Endothelial cell of umbilical vein (primary cell): ENCODE measurements at regions of chr2 and their contacts with region 1.

Region 1: DNA sequence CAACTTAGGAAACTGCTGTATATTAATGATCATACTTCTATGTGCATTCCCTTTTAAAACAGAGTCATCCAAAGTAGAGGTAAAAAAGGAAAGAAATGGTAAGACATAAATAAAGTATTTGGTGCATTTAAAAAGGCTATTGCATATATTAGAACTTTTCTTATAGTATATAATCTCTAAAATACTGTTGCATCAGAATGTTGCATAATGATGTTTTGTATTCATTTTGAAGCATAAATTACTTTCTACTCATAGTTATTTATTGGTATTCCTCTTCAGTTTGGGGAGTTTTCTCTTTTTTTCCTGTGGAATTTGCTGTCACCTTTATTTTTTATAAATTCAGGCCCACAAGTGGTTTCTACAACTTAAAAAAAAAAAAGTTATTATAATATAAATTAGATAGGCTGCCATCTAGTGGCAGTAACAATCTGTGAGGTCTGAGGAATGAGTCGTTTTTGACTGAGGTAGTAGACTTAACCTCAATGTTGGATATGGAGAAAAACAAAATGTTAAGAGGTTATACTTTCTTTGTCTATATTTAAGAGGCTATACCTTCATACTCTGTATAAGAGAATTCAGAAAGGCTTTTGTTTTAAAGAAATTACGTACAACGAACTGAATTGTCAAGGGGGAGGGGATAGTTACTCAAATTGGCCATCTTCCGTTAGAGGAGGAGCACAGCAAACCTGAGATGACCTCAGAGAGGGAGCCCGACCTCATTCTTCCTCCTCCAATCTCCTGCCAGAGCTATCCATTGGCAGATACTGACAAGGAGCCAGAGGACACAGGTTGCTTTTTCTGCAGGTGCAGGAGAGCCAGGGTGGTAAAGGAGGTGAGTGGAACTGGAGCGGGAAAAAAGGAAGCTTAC is 23.8 kb downstream of the ANKAR start:
- DNase-seq: peak; percentile 60
- H3K4me3 ChIP-seq: no peak overlapping the region
- H3K27ac ChIP-seq: no peak overlapping the region
- H3K4me1 ChIP-seq: no peaks in the 10 kb centered on the region
- H3K27me3 ChIP-seq: no peaks in the 10 kb centered on the region
- CTCF ChIP-seq: peak; percentile 13 to 33
- POLR2A ChIP-seq: no peak

Region 2: GRCh38 chr2:189534854-189535832 is 163.1 kb before region 1 on chr2:
- CTCF ChIA-PET with region 1: no interaction called
- POLR2A ChIA-PET with region 1: no interaction called
- dilution Hi-C with region 1: no loop called
- intact Hi-C with region 1: no loop called
- DNase-seq: no peak
- H3K4me3 ChIP-seq: no peak overlapping the region
- H3K27ac ChIP-seq: no peak overlapping the region
- H3K4me1 ChIP-seq: no peaks in the 10 kb centered on the region
- H3K27me3 ChIP-seq: no peaks in the 10 kb centered on the region
- CTCF ChIP-seq: no peak
- POLR2A ChIP-seq: no peak

Region 3: DNA sequence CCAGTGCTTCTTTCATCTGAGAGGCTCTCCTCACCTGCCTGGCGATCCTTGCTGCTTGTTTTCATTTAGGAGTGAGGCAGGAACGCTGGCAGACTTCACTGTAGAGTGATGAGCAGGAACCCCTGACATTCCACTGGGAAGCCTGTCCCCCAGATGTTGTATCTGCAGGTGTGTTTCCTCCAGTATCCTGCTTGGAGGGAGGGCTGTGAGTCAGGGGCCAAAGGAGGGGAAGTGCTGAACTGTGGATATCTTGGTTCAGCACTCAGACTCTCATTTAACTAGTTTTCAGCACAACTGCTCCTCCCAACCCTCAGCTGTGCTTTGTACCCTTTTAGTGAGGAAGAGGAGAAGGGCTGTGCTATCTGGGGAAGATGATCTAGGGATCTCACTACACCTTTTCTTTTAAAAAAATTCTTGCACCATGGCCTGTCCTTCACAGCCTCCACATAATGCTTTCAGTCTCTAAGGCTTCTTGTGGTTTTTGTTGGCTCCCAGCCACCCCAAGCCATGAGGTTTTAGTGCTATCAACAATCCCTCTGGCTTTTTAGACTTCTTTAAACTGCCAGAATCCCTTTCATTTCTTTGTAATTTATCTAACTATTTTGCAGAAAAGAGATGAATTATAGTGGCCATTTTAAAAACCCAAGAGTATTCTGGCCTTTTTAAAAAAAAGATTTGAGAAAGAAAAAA is 12.6 kb before region 1 on chr2:
- CTCF ChIA-PET with region 1: interaction called, 10 read pairs
- POLR2A ChIA-PET with region 1: no interaction called
- dilution Hi-C with region 1: no loop called
- intact Hi-C with region 1: no loop called
- DNase-seq: peak; percentile 59
- H3K4me3 ChIP-seq: no peak overlapping the region
- H3K27ac ChIP-seq: no peak overlapping the region
- H3K4me1 ChIP-seq: peaks cover 10% of the 10 kb centered on the region
- H3K27me3 ChIP-seq: no peaks in the 10 kb centered on the region
- CTCF ChIP-seq: no peak
- POLR2A ChIP-seq: no peak

Region 4: DNA sequence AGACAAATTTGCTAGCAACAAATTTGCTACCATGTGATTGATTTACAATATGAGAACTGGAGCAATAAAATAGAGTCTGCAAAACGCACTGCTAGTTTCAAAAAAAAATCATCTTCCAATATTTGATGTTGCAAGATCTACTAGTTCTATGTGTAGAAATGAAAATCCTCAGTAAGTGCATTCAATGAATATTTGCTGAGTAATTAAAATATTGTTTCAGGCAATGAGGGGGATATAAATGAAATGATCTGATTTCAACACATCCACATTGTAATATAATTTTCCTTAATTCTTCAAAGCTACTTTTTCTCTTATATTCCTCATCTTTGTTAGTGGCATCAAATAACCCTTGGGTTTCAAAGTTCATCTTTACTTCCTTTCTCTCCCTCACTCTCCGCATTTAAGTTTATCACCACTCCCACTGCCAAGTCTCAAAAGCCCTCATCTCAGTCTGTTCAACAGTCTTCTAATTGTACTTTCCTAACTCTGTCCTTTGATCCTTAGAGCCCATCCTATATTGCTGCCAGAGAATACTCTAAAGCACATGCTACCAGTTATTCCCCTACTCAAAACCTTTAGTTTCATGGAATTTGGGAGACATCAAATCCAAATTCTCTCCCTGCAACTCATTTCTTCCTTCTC is 58.2 kb after region 1 on chr2:
- CTCF ChIA-PET with region 1: no interaction called
- POLR2A ChIA-PET with region 1: no interaction called
- dilution Hi-C with region 1: no loop called
- intact Hi-C with region 1: no loop called
- DNase-seq: no peak
- H3K4me3 ChIP-seq: no peak overlapping the region
- H3K27ac ChIP-seq: no peak overlapping the region
- H3K4me1 ChIP-seq: no peaks in the 10 kb centered on the region
- H3K27me3 ChIP-seq: no peaks in the 10 kb centered on the region
- CTCF ChIP-seq: no peak
- POLR2A ChIP-seq: no peak